BJ (cell line): ENCODE measurements at regions of chr19 and their contacts with region 1.

Region 1: GRCh38 chr19:40465557-40466150 is at the start of gene BLVRB:
- DNase-seq: peak; percentile 97
- H3K4me3 ChIP-seq: peak within 1 kb of the TSS; percentile 64
- H3K27me3 ChIP-seq: no peaks in the 10 kb centered on the region
- CTCF ChIP-seq: no peak
- polyA plus RNA-seq, gene BLVRB: 41.5 and 71.4 TPM in 2 replicates

Region 2: GRCh38 chr19:40365613-40366401 is 99.8 kb before region 1 on chr19:
- CTCF ChIA-PET with region 1: no interaction called
- POLR2A ChIA-PET with region 1: no interaction called
- DNase-seq: no peak
- H3K4me3 ChIP-seq: peak overlapping the region; percentile 56
- H3K27me3 ChIP-seq: no peaks in the 10 kb centered on the region
- CTCF ChIP-seq: no peak

Region 3: DNA sequence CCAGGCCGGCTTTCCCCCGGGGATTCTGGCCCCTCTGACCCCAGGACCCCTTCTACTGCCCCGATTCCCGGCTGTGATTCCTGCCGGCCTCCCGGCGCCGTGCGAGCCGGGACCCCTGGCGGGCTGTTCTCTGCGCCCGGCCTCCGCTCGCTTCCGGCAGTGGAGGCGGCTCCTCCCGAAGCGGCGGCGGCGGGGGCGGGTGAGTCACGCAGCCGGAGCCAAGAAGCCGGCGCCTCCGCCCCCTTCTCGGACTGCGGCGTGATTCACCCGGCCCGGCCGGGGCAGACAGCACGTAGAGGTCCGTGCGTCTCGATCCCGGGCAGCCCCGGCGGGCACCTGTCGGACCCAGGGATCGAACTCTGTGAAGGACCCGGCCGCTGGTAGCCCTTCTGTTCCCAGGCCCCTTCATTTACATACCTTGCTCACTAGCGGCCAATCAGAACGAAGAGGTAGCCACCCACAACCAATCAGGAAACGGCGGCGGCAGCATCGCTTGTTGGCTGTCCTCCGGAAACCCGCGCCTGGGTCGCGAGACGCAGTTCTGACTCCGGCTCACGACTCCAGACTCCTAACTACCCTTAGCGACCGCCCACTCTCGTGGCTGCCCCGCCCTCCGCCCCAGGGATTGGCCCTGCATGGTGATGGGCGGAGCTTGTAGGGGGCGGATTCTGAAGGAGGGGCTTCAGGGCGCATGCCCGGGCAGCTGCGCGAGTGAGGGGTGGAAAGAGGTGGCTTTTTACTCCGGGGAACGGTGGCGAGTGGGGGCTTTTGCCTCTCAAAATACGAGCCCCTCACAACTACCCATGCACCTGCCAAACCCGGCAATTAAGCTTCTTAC is 40.0 kb before region 1 on chr19 and contains the start of gene SERTAD1:
- CTCF ChIA-PET with region 1: interaction called, 11 read pairs
- POLR2A ChIA-PET with region 1: interaction called, 4 read pairs
- DNase-seq: peak; percentile 94
- H3K4me3 ChIP-seq: peak within 1 kb of the TSS; percentile 61
- H3K27me3 ChIP-seq: no peaks in the 10 kb centered on the region
- CTCF ChIP-seq: peak; percentile 83
- polyA plus RNA-seq, gene SERTAD1: 14.5 and 21.9 TPM in 2 replicates

Region 4: GRCh38 chr19:40443131-40443810 is 22.4 kb before region 1 on chr19:
- CTCF ChIA-PET with region 1: interaction called, 7 read pairs
- POLR2A ChIA-PET with region 1: interaction called, 16 read pairs
- DNase-seq: peak; percentile 99
- H3K4me3 ChIP-seq: peak overlapping the region; percentile 97
- H3K27me3 ChIP-seq: no peaks in the 10 kb centered on the region
- CTCF ChIP-seq: no peak

Region 5: DNA sequence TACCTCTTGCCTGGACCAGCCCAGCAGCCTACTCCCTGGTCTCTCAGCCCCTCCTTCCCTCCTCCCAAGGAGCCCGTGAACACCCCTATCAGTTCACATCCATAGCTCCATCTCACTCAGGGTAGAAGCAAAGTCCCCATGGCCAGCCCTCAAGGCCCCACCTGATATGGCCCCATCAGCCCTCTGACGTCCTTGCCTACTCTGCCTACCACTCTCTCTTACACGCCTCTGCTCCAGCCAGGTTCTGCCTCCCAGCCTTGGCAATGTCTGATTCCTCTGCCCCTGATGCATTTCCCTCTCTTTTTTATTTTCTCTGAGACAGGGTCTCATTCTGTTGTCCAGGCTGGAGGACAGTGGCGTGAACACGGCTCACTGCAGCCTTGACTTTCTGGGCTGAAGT is 13.6 kb before region 1 on chr19:
- CTCF ChIA-PET with region 1: interaction called, 37 read pairs
- POLR2A ChIA-PET with region 1: no interaction called
- DNase-seq: no peak
- H3K4me3 ChIP-seq: no peak overlapping the region
- H3K27me3 ChIP-seq: no peaks in the 10 kb centered on the region
- CTCF ChIP-seq: no peak

Region 6: GRCh38 chr19:40542202-40542859 is 76.7 kb after region 1 on chr19:
- CTCF ChIA-PET with region 1: interaction called, 10 read pairs
- POLR2A ChIA-PET with region 1: no interaction called
- DNase-seq: no peak
- H3K4me3 ChIP-seq: no peak overlapping the region
- H3K27me3 ChIP-seq: 0 out of 2 replicates have a peak, but pooled peaks cover 1% of the 10 kb centered on the region
- CTCF ChIP-seq: no peak

Region 7: DNA sequence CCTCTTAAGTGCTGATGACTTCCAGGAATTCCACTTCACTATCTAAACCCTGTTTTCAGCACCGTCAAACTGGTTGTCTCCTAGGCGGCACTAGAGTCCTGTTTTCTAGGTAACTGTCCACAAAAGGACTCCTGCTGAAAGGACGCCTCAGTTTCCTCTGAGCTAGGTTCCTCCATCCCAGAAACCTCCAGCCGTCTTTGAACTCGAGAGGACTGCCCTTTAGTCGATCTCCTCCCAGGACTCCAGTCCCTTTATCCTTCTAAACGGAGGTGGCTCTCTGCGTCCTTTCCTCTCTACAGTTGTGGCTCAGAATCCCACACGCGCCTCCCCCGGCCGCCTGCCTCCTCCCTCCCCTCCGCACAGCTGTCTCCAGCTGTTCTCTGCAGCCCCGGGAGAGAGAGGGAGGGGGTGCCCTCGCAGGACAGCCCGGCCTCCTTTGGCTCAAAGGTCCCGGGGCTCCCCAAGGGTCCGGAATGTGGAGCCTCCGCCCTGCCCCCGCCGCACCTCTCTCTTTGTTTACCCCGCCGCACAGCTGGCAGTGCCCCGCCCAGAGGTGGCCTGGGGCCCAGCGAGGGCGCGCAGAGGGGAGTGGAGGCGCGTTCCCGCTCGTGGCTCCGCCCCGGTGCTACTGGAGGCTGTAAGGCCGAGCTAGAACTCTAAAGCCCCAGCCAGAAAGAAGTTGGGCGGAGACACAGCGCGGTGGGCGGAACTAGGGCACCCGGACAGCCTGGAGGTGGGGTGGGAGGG is 137.9 kb after region 1 on chr19:
- CTCF ChIA-PET with region 1: interaction called, 50 read pairs
- POLR2A ChIA-PET with region 1: interaction called, 3 read pairs
- DNase-seq: peak; percentile 85
- H3K4me3 ChIP-seq: peak overlapping the region; percentile 44
- H3K27me3 ChIP-seq: 0 out of 2 replicates have a peak, but pooled peaks cover 2% of the 10 kb centered on the region
- CTCF ChIP-seq: peak; percentile 20; the same call in 1 of the 2 replicates